Left colon (tissue), 2 donors: ENCODE measurements at regions of chr1 and their contacts with region 1.

Region 1: DNA sequence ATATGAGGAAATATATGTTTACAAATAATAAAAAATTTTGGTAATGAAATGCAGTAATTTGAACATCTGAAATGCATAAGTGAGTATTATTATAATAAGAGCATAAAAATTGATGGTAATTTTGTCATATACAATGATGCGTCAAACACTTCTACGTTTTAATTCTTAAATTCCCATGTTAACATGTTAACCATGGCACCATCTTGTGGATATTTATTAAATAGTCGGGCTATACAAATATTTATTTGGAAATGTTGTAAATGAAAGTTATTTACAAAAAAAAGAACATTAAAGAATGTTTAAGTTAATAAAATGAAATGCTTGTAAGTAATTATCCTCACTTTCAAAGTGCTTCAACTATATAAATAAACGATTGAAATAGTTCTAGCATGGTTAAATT is 57.2 kb upstream of the C1orf185 start:
- DNase-seq: no peak
- ATAC-seq: no peak

Region 2: GRCh38 chr1:50774759-50775351 is 270.0 kb before region 1 on chr1:
- intact Hi-C with region 1: loop called in 1 of 2 experiments (anchors 10 kb)
- DNase-seq: no peak
- ATAC-seq: peak; percentile 82

Region 3: DNA sequence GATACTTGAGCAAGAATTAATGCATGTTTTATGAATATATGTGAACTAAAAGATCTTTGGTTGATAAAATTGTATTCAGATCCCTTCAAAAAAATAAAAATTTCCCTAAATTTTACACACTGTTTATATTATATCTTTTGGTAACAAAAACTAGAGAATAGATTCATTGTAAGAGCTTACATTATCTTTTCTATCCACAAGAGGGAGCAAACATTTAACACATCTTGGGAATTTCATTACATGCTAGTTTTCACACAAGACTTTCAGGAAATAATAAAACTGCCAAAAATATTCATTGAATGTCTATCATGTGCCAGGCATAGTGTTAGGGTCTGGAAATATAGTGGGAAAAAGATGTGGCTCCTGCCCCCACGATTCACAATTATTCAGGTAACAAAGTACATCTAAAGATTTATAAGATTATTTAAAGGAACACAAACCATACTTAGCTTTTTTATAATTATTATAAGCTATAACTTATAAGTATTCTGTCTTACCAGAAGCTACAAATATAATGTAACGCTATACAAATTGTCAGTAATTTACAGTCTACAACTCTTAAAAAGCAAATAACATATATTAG is 115.4 kb before region 1 on chr1:
- intact Hi-C with region 1: loop called in 1 of 2 experiments (anchors 10 kb)
- DNase-seq: no peak
- ATAC-seq: peak; percentile 52

Region 4: GRCh38 chr1:51147394-51147793 is 102.6 kb after region 1 on chr1:
- intact Hi-C with region 1: no loop called
- DNase-seq: no peak
- ATAC-seq: no peak